Activated CD4-positive, alpha-beta memory T cell treated with anti-CD3 and anti-CD28 coated beads for 36 hours (primary cell): ENCODE measurements at regions of chr1 and their contacts with region 1.

Region 1: DNA sequence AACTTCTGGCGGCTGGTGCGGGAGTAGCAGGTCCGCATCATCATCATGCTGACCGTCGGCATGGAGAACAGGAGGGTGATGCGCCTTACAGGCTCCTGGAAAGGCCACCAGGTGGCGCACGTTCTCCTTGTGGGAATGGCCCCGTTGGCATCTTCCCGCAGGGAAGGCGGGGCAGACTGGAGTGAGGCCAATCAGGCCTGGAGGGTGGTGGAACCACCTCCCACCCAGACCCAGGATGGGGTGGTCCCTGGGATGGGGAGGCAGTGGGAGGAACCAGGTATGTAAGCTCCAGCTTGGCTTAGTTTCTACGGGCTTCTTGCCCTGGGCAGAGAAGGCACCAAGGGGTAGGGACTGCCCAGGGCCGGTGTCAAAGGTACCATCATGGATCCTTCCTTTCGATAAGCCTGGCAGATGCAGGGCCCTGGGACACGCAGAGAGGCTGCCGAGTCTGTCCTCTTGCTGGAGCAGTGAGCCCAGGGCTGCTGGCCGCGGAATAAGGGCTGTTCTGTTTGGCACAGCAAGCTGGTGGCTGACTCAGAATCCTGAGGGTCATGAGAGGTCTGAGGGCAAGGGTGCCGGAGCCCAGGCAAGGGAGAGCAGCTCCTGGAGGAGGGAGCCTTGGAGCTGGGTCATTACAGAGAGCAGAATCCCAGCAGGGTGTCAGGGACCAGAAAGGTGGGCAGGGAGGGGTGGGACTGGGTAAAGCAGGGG is 8.7 kb upstream of the LGR6 start:
- DNase-seq: peak; percentile 84
- H3K4me3 Mint-ChIP-seq: no peak overlapping the region
- H3K27ac Mint-ChIP-seq: no peak overlapping the region
- H3K4me1 Mint-ChIP-seq: peaks cover 8% of the 10 kb centered on the region
- H3K27me3 Mint-ChIP-seq: no peaks in the 10 kb centered on the region

Region 2: GRCh38 chr1:202710070-202711045 is 525.5 kb after region 1 on chr1 and contains the start of gene SYT2:
- CTCF ChIA-PET with region 1: interaction called, 3 read pairs
- POLR2A ChIA-PET with region 1: no interaction called
- intact Hi-C with region 1: loop called (anchors 10 kb)
- DNase-seq: peak; percentile 18
- H3K4me3 Mint-ChIP-seq: no peak within 1 kb of the TSS
- H3K27ac Mint-ChIP-seq: no peak within 1 kb of the TSS
- H3K4me1 Mint-ChIP-seq: peaks cover 3% of the 10 kb centered on the region
- H3K27me3 Mint-ChIP-seq: peaks cover 57% of the 10 kb centered on the region
- total RNA-seq, gene SYT2: not detected